Left colon (tissue), 2 donors: ENCODE measurements at regions of chr19 and their contacts with region 1.

Region 1: GRCh38 chr19:57279418-57280066 is 743 bp upstream of the ZNF460 start:
- DNase-seq: peak; percentile 89 to 95
- ATAC-seq: peak; percentile 91

Region 2: DNA sequence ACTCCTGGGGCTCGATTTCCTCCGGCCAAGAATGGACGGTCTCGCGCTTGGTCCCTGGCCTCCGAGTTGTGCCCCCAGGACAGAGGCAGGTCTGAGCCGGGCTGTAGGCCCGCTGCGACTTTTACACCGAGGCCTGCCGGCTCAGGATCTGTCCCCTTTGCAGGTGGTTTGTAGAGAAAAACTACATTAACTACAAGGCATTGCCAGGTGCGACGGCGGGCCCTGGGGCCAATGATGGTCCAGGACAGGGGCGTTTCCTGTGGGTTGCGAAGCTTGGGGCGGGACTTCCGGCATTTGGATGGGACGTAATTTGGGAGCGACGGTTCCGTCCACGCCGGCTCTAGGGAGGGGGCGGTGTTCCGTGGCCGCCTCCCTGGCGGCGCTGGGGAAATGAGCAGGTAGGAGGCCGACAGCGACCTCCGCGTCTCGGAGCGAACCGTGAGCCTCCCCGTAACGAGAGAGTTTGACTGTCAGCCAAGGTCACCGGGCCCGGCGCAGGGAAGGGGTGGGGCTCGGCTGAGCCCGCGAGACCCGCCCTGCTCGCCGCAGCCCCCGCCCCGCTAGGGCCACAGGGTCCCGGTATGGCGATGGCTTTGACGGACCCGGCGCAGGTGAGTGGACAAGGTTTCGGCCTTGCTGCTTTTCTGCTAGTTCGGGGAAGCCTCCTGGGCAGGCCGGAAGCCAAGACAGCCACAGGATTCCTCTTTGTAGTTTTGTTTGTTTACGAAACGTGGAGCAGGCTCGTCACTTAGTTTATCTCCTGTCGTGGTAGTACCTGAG is 39.0 kb before region 1 on chr19 and contains the start of gene ZNF805:
- intact Hi-C with region 1: loop called in 1 of 2 experiments (anchors 5 kb)
- DNase-seq: peak; percentile 97 to 98
- ATAC-seq: peak; percentile 99
- total RNA-seq, gene ZNF805: 9.5 to 10.4 TPM

Region 3: GRCh38 chr19:57362997-57363705 is 83.6 kb after region 1 on chr19 and contains the starts of genes TRAPPC2B and ZNF547:
- intact Hi-C with region 1: no loop called
- DNase-seq: peak; percentile 99
- ATAC-seq: peak; percentile 99
- total RNA-seq, gene TRAPPC2B: 4.4 to 4.5 TPM
- total RNA-seq, gene ZNF547: 1.4 to 1.8 TPM